ENCODE measurements at regions of chr10 and their contacts with region 1.

Region 1: GRCh38 chr10:14032395-14032998 is 298.2 kb downstream of the FRMD4A start:
- DNase-seq: peak; percentile 5
- H3K4me3 ChIP-seq: no peak overlapping the region
- H3K27ac ChIP-seq: no peak overlapping the region
- H3K4me1 ChIP-seq: no peaks in the 10 kb centered on the region
- CTCF ChIP-seq: peak; percentile 79

Region 2: GRCh38 chr10:13961097-13961496 is 71.4 kb before region 1 on chr10:
- CTCF ChIA-PET with region 1: no interaction called
- POLR2A ChIA-PET with region 1: no interaction called
- intact Hi-C with region 1: no loop called
- DNase-seq: no peak
- H3K4me3 ChIP-seq: no peak overlapping the region
- H3K27ac ChIP-seq: no peak overlapping the region
- H3K4me1 ChIP-seq: no peaks in the 10 kb centered on the region
- CTCF ChIP-seq: no peak

Region 3: DNA sequence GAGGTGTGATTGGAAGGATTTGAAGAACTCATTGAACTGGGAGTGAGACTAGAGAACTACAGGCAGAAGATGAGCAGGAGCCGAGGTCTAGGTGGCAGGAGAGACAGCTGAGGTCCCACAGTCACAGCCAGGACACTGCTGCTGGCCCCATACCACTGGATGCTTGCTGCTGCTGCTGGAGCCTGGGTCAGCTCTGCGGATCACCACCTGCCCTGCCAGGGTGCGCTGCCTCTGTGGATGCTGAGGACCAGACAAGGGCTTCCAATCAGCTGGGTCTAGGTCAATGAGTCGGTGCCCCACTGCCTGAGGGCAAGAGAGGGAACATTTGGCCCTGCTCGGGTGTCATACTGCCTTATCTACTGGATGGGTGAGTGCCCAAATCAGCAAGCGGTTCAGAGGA is 203.8 kb after region 1 on chr10:
- CTCF ChIA-PET with region 1: no interaction called
- POLR2A ChIA-PET with region 1: interaction called, 13 read pairs
- intact Hi-C with region 1: no loop called
- DNase-seq: no peak
- H3K4me3 ChIP-seq: no peak overlapping the region
- H3K27ac ChIP-seq: no peak overlapping the region
- H3K4me1 ChIP-seq: no peaks in the 10 kb centered on the region
- CTCF ChIP-seq: no peak